PC-9 (cell line): ENCODE measurements at regions of chr10 and their contacts with region 1.

Region 1: DNA sequence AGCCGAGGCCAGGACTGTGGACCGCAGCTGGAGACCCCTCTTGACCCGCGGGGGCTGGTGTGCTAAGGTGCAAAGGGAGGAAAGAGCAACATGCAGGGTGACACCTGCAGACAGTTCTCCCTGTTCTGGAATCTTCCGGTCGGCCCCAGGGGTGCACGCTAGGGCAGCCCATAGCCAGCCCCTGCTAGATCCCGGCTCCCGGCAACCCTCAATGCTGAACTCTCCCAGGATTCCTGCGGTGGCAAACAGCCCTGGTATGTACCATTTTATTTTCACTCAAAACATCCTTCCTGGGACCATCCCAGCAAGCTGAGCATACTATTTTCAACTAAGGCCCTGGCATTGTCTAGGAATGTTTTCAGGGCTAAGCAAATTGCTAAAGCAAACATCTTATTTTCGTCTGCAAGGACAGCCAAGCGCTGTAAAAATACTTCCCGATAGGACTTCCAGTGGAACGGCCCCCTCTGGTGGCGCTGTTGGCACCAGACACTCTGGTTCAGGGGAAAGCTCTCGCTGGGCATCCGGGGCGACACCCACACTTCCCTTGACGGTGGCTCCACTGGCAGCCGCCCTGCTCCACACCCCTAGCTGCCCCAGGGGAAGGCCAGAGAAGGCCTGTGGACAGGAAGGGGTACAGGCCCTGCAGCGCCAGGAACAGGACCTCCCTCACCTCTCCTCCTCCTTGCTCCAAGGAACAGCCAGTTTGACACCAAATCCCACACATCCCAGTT is 99.4 kb downstream of the CTBP2 start:
- DNase-seq: peak in 1 of 2 experiments; percentile 67
- H3K4me3 ChIP-seq: no peak overlapping the region
- H3K27ac ChIP-seq: no peak overlapping the region
- H3K4me1 ChIP-seq: peaks cover 37% of the 10 kb centered on the region
- H3K27me3 ChIP-seq: no peaks in the 10 kb centered on the region
- CTCF ChIP-seq: peak; percentile 53

Region 2: GRCh38 chr10:125038637-125039036 is 22.4 kb before region 1 on chr10:
- CTCF ChIA-PET with region 1: no interaction called
- POLR2A ChIA-PET with region 1: no interaction called
- intact Hi-C with region 1: loop called (anchors 1 kb)
- DNase-seq: peak in 1 of 2 experiments; percentile 28
- H3K4me3 ChIP-seq: no peak overlapping the region
- H3K27ac ChIP-seq: peak overlapping the region; percentile 85; the same call in 1 of the 2 replicates
- H3K4me1 ChIP-seq: peaks cover 28% of the 10 kb centered on the region
- H3K27me3 ChIP-seq: no peaks in the 10 kb centered on the region
- CTCF ChIP-seq: no peak

Region 3: GRCh38 chr10:125048101-125048864 is 12.7 kb before region 1 on chr10:
- CTCF ChIA-PET with region 1: interaction called, 3 read pairs
- POLR2A ChIA-PET with region 1: interaction called, 3 read pairs
- intact Hi-C with region 1: loop called (anchors 1 kb)
- DNase-seq: peak; percentile 44 to 72
- H3K4me3 ChIP-seq: no peak overlapping the region
- H3K27ac ChIP-seq: no peak overlapping the region
- H3K4me1 ChIP-seq: peaks cover 32% of the 10 kb centered on the region
- H3K27me3 ChIP-seq: no peaks in the 10 kb centered on the region
- CTCF ChIP-seq: peak; percentile 85

Region 4: DNA sequence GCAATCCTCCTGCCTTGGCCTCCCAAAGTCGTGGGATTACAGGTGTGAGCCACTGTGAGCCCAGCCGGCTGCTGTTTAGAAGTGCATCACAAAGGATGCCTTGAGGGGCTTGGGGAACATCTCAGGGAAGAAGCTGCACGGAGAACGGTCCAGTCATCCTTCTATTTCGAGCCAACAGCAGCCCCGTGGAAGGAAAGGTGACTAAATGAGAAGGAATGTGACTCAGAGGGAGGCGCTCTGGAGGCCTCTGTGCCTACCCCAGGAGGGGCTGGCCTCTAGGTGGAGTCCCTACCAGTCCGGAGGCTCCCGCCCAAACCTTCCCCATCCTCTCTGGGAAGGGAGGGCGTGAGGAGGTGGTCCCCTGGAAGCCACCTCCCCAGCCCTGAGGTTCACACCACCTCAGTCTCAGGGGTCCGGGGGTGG is 23.2 kb after region 1 on chr10:
- CTCF ChIA-PET with region 1: interaction called, 4 read pairs
- POLR2A ChIA-PET with region 1: interaction called, 3 read pairs
- intact Hi-C with region 1: loop called (anchors 1 kb)
- DNase-seq: peak; percentile 58 to 70
- H3K4me3 ChIP-seq: no peak overlapping the region
- H3K27ac ChIP-seq: no peak overlapping the region
- H3K4me1 ChIP-seq: no peaks in the 10 kb centered on the region
- H3K27me3 ChIP-seq: no peaks in the 10 kb centered on the region
- CTCF ChIP-seq: no peak

Region 5: DNA sequence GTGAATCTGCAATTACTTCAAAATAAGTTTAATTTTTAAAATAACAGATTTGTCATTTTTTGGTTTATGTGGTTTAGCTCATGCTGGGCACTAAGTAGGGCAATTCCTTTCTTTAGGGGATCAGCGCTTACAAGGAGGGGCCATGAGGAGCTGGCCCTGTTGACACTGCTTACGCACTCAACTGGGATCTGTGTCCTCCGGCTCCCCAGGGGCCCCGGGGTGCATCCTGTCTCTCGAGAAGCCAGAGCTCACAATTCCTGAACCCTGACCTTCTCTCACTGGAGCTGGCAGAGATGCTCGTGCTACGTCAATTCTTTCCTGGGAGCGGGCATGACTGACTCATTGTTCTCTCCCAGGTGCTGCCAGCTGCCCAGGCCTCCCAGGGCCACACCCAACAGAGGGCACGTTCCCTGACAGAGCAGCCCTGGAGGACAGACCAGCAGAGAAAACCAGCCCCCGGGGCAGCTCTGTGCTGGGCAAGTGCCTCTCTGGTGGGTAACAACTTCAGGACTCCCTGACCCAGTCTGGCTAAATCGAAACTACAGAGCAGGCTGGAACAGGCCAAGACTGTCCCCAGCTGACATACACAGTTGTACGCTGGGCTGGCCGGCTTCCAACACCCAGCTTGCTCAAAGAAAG is 62.6 kb after region 1 on chr10:
- CTCF ChIA-PET with region 1: no interaction called
- POLR2A ChIA-PET with region 1: no interaction called
- intact Hi-C with region 1: loop called (anchors 2 kb)
- DNase-seq: peak; percentile 84 to 89
- H3K4me3 ChIP-seq: no peak overlapping the region
- H3K27ac ChIP-seq: peak overlapping the region; percentile 82
- H3K4me1 ChIP-seq: peaks cover 26% of the 10 kb centered on the region
- H3K27me3 ChIP-seq: no peaks in the 10 kb centered on the region
- CTCF ChIP-seq: no peak

Region 6: GRCh38 chr10:125694874-125695273 is 633.9 kb after region 1 on chr10:
- CTCF ChIA-PET with region 1: no interaction called
- POLR2A ChIA-PET with region 1: interaction called, 13 read pairs
- intact Hi-C with region 1: no loop called
- DNase-seq: peak; percentile 40 to 84
- H3K4me3 ChIP-seq: no peak overlapping the region
- H3K27ac ChIP-seq: 0 out of 2 replicates have a peak overlapping the region, but pooled peaks have one; percentile 24
- H3K4me1 ChIP-seq: peaks cover 13% of the 10 kb centered on the region
- H3K27me3 ChIP-seq: no peaks in the 10 kb centered on the region
- CTCF ChIP-seq: no peak

Region 7: GRCh38 chr10:125822878-125823662 is 762.1 kb after region 1 on chr10 and contains the starts of genes BCCIP and UROS:
- CTCF ChIA-PET with region 1: no interaction called
- POLR2A ChIA-PET with region 1: no interaction called
- intact Hi-C with region 1: loop called (anchors 5 kb)
- DNase-seq: peak; percentile 66 to 75
- H3K4me3 ChIP-seq: peak within 1 kb of the TSS; percentile 81
- H3K27ac ChIP-seq: peak within 1 kb of the TSS; percentile 88
- H3K4me1 ChIP-seq: peaks cover 14% of the 10 kb centered on the region
- H3K27me3 ChIP-seq: no peaks in the 10 kb centered on the region
- CTCF ChIP-seq: no peak
- total RNA-seq, gene BCCIP: 35.2 and 46.0 TPM in 2 replicates
- total RNA-seq, gene UROS: 35.1 and 40.1 TPM in 2 replicates